ENCODE measurements at regions of chr7 and their contacts with region 1.

Region 1: GRCh38 chr7:2886900-2887299 is 42.8 kb upstream of the GNA12 start:
- DNase-seq: no peak
- H3K4me3 ChIP-seq: no peak overlapping the region
- H3K27ac ChIP-seq: no peak overlapping the region
- H3K4me1 ChIP-seq: no peaks in the 10 kb centered on the region
- H3K27me3 ChIP-seq: no peaks in the 10 kb centered on the region
- CTCF ChIP-seq: peak; percentile 67 to 80 (median 78)

Region 2: GRCh38 chr7:2688409-2689331 is 198.2 kb before region 1 on chr7:
- intact Hi-C with region 1: no loop called
- DNase-seq: no peak
- H3K4me3 ChIP-seq: peak overlapping the region; percentile 41 to 62
- H3K27ac ChIP-seq: no peak overlapping the region
- H3K4me1 ChIP-seq: peaks cover 4 to 27% of the 10 kb centered on the region in 2 donors
- H3K27me3 ChIP-seq: no peaks in the 10 kb centered on the region
- CTCF ChIP-seq: no peak

Region 3: DNA sequence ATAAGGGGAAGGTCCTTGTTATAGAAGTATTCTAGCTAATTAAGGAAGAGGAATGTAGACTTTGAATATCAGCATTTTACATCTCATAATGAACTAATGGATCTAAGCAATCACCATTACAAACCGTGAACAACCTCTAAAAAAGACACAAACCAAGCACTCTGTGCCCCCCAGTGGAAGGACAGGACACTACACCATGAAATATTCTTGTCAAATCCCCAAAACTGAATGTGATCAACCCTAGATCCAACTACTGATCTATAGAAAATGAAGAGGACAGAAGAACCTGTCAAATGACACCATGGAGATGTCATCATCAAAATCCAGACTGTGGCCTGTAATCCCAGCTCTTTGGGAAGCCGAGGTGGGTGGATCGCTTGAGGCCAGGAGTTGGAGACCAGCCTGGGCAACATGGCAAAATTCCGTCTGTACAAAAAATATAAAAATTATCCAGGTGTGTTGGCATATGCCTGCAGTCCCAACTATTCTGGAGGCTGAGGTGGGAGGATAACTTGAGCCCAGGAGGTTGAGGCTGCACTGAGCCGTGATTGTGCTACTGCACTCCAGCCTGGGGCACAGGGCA is 268.1 kb after region 1 on chr7:
- intact Hi-C with region 1: loop called (anchors 5 kb)
- DNase-seq: no peak
- H3K4me3 ChIP-seq: no peak overlapping the region
- H3K27ac ChIP-seq: no peak overlapping the region
- H3K4me1 ChIP-seq: no peaks in the 10 kb centered on the region
- H3K27me3 ChIP-seq: no peaks in the 10 kb centered on the region
- CTCF ChIP-seq: peak; percentile 39 to 43 (median 42)

Region 4: GRCh38 chr7:3897438-3898385 is 1010.8 kb after region 1 on chr7:
- intact Hi-C with region 1: loop called (anchors 5 kb)
- DNase-seq: no peak
- H3K4me3 ChIP-seq: no peak overlapping the region
- H3K27ac ChIP-seq: no peak overlapping the region
- H3K4me1 ChIP-seq: peaks cover 0 to 3% of the 10 kb centered on the region in 2 donors
- H3K27me3 ChIP-seq: no peaks in the 10 kb centered on the region
- CTCF ChIP-seq: peak; percentile 59 to 69 (median 62)

Measured in ascending aorta (tissue), 2 donors.